Calu3 (cell line): ENCODE measurements at regions of chr7 and their contacts with region 1.

Region 1: DNA sequence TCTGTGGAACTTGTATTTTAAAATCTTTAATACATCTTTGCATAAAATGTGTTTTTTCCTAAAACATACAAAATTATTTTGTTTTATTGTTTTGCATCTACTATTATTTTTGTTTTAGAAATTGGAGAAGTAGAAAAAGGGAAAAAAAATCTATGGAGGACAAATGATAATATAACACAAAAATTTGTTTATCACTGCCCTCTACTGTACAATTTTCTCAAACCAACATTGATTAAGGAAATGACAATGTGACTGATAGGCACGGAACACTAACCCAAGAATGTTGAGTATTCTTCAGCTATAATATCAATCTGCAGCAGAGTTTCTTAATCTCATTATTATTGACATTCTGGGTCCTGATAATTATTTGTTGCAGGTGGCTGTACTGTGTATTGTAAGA is 9.5 kb upstream of the ING3 start:
- DNase-seq: no peak
- H3K4me3 Mint-ChIP-seq: no peak overlapping the region
- H3K27ac Mint-ChIP-seq: no peak overlapping the region
- H3K4me1 Mint-ChIP-seq: no peaks in the 10 kb centered on the region
- H3K27me3 Mint-ChIP-seq: no peaks in the 10 kb centered on the region
- CTCF ChIP-seq: no peak

Region 2: DNA sequence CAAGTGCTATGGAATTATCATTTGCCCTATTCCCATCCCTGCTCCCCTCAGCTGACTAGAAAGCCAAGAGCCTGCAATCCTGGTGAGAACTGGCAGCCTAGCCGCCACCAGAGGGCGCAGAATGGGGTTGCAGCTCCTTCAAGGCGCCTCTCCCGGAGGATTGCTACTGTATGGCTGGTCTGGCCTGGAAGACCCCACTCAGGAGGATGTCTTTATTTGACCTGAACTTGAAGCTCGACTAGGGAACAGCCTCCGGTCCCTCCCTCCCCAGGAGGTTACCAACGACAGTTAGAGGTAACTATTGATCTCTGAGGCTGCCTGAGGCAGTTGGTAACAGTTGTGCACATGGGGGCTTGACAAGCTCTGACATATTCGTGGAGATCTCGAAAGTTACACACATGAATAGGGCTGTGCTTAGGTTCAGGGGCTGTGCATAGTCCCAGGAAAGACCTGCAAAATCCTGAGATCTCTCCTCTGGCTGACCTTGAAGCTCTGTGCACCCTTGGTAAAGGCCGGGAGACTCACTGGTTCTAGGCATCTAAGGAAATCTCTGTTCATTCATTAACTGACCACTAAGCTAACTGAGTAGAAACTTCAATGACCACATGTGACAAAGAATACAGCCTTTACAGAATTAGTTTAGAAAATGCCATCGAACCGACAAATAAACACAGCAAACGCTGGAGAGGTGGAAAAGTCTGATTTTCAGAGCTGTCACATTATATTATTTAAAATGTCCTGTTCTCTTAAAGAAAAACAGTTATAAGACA is 148.8 kb before region 1 on chr7:
- CTCF ChIA-PET with region 1: interaction called, 4 read pairs
- intact Hi-C with region 1: loop called (anchors 1 kb)
- DNase-seq: peak; percentile 84
- H3K4me3 Mint-ChIP-seq: no peak overlapping the region
- H3K27ac Mint-ChIP-seq: no peak overlapping the region
- H3K4me1 Mint-ChIP-seq: peaks cover 7% of the 10 kb centered on the region
- H3K27me3 Mint-ChIP-seq: no peaks in the 10 kb centered on the region
- CTCF ChIP-seq: peak; percentile 88

Region 3: GRCh38 chr7:120857588-120858573 is 83.2 kb before region 1 on chr7 and contains the start of gene TSPAN12:
- CTCF ChIA-PET with region 1: no interaction called
- intact Hi-C with region 1: loop called (anchors 1 kb)
- DNase-seq: peak; percentile 82
- H3K4me3 Mint-ChIP-seq: peak within 1 kb of the TSS; percentile 98
- H3K27ac Mint-ChIP-seq: peak within 1 kb of the TSS; percentile 94
- H3K4me1 Mint-ChIP-seq: peaks cover 9% of the 10 kb centered on the region
- H3K27me3 Mint-ChIP-seq: no peaks in the 10 kb centered on the region
- CTCF ChIP-seq: peak; percentile 74
- total RNA-seq, gene TSPAN12: 14.6 and 18.5 TPM in 2 replicates

Region 4: GRCh38 chr7:121032645-121033460 is 91.8 kb after region 1 on chr7:
- CTCF ChIA-PET with region 1: no interaction called
- intact Hi-C with region 1: no loop called
- DNase-seq: no peak
- H3K4me3 Mint-ChIP-seq: no peak overlapping the region
- H3K27ac Mint-ChIP-seq: no peak overlapping the region
- H3K4me1 Mint-ChIP-seq: no peaks in the 10 kb centered on the region
- H3K27me3 Mint-ChIP-seq: no peaks in the 10 kb centered on the region
- CTCF ChIP-seq: no peak

Region 5: DNA sequence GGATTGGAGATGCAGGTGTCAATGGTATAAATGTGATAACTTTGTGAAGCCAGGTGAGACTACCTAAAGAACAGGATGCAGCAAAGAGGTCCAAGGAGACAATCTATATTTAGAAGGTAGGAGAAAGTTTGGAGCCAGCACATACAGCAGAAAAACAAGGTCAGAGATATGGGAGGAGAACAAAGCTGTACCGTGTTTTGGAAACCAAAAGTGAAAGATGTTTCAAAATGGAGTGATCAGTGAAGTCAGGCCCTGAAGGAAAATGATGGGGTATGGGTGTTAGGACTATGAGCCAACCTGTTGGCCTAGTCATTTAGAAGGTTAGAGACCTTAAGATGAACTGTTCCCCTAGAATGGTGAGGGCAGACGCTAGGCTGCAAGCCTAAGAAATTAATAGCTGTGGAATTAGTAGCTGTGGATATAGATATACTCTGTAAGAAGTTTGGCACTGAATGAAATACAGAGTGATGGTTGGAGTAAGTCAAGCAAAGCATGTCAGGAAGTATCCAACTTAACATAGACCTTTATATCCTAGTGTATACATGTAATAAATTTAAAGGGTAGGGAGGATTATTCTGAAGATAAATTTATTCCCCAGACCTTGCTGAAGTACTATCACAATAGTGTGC is 237.9 kb after region 1 on chr7:
- CTCF ChIA-PET with region 1: no interaction called
- intact Hi-C with region 1: no loop called
- DNase-seq: no peak
- H3K4me3 Mint-ChIP-seq: no peak overlapping the region
- H3K27ac Mint-ChIP-seq: no peak overlapping the region
- H3K4me1 Mint-ChIP-seq: no peaks in the 10 kb centered on the region
- H3K27me3 Mint-ChIP-seq: no peaks in the 10 kb centered on the region
- CTCF ChIP-seq: no peak